ENCODE measurements at regions of chr14 and their contacts with region 1.

Region 1: DNA sequence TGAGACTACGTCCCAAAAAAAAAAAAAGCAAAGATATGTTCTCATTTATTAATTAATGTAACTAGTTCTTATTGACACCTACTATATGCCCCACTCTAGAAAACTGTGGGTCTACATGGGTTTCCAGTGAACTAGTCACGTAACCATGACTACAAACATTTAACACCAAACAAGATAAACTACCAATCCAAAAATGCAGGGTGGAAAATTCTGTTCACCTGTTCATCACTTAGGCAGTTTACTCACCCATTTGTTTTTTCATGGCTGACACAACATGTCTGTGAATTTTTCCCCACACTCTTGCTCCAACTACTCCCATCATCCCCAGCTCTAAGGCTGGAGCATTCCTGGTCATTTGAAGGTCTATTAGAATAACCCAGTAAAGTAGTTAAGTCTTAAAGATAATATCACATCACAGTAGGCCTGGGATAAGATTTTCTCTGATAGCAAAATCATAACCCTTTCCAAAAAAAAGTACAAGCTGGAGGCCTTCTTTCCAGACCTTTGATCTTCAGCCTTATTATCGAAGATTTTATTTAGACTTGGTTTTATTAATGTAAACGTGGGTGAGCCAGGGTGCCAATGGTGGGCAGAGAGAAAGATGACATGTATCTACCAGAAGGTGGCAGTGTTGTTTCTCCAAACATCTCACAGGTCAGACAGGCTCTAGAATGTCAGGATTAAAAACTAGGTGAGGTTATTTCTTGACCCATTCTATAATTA is 61.6 kb upstream of the DAAM1 start:
- DNase-seq: no peak
- ATAC-seq: peak; percentile 95
- H3K4me3 Mint-ChIP-seq: no peak overlapping the region
- H3K27ac Mint-ChIP-seq: no peak overlapping the region
- H3K4me1 Mint-ChIP-seq: no peaks in the 10 kb centered on the region
- H3K27me3 Mint-ChIP-seq: peaks cover 3% of the 10 kb centered on the region
- CTCF ChIP-seq: peak; percentile 68

Region 2: DNA sequence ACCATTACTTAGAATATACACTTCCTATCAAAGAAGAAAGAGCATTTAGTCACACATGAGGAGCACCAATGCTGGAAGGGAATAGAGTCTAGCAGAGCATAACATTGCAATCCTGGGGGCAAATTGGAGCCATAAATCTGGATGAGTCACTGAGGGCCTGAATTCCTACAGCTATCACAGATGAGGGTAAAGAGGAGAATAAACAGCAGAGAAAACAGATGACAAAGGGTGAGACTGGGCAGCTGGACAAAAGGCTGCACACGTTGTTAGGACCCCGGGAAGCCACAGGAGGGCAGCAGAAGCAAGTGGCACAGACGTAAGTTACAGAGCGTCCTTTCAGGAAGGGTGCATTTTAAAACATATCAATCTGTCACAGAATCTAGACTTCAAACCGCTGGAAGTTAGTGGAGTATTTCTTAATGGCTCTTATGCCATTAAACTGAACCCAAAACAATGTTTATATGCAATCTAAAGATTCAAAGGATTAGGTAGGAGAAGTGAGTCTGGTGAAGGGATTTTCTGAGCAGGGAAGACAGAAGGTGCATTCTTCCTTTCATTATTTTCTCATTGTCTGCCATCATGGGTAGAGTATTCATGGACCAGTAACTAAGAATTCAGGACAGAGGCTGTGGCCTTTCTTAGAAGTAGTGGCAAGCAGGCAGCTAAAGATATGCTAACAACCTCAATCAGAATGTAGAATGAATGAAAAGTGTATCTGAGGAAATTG is 98.2 kb before region 1 on chr14:
- CTCF ChIA-PET with region 1: no interaction called
- POLR2A ChIA-PET with region 1: no interaction called
- intact Hi-C with region 1: loop called (anchors 2 kb)
- DNase-seq: no peak
- ATAC-seq: no peak
- H3K4me3 Mint-ChIP-seq: no peak overlapping the region
- H3K27ac Mint-ChIP-seq: no peak overlapping the region
- H3K4me1 Mint-ChIP-seq: peaks cover 6% of the 10 kb centered on the region
- H3K27me3 Mint-ChIP-seq: peaks cover 11% of the 10 kb centered on the region
- CTCF ChIP-seq: no peak

Region 3: GRCh38 chr14:59358105-59358504 is 231.2 kb after region 1 on chr14:
- CTCF ChIA-PET with region 1: no interaction called
- POLR2A ChIA-PET with region 1: no interaction called
- intact Hi-C with region 1: loop called (anchors 10 kb)
- DNase-seq: no peak
- ATAC-seq: no peak
- H3K4me3 Mint-ChIP-seq: no peak overlapping the region
- H3K27ac Mint-ChIP-seq: no peak overlapping the region
- H3K4me1 Mint-ChIP-seq: peaks cover 83% of the 10 kb centered on the region
- H3K27me3 Mint-ChIP-seq: no peaks in the 10 kb centered on the region
- CTCF ChIP-seq: no peak

Region 4: DNA sequence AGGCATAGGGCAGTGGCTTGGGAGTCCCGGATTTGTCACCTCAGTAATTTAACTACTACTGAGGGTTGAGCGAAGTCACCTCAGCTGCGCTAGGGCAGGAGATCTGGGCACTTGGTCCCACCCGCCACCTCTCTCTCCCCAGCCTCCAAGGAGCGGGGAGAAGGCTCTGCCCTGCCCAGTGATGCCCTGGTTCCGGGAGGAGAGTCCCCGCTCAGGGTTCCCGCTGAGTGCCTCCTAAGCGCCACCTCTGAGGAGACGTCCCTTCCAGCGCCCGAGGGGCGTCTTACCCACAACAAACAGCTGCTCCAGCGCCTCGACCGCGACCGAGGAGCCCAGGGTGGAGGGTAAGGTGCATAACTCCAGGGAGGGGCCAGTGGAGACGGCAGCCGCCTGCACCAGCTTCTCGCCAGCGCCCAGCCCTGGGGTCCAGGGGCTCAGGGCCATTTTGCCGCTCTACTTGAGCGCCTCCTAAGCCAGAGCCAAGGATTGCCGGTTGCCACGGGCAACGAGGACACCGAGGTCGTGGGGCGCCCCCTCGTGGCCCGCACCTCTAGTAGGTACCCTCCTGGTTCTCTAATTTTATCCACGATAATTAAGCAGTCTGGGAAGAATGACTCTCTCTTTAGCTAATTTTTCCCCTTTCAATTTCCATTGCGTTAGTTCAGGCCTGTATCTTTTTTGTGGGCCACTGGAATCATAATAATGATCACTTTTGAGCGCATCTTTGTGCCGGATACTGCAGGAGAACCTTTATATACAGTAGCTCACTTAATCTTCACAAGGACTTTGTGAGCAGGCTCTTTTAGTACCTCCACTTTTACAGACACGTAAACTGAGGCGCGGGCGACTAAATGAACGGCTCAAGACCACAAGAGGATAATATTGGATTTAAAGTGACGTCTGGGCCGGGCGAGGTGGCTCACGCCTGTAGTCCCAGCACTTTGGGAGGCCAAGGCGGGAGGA is 449.7 kb after region 1 on chr14 and contains the start of gene CCDC175:
- CTCF ChIA-PET with region 1: interaction called, 4 read pairs
- POLR2A ChIA-PET with region 1: no interaction called
- intact Hi-C with region 1: loop called (anchors 1 kb)
- DNase-seq: peak; percentile 68
- ATAC-seq: peak; percentile 94
- H3K4me3 Mint-ChIP-seq: peak within 1 kb of the TSS; percentile 70
- H3K27ac Mint-ChIP-seq: no peak within 1 kb of the TSS
- H3K4me1 Mint-ChIP-seq: peaks cover 8% of the 10 kb centered on the region
- H3K27me3 Mint-ChIP-seq: peaks cover 11% of the 10 kb centered on the region
- CTCF ChIP-seq: no peak
- total RNA-seq, gene CCDC175: not detected in 2 replicates

Region 5: GRCh38 chr14:60184146-60184904 is 1057.5 kb after region 1 on chr14:
- CTCF ChIA-PET with region 1: no interaction called
- POLR2A ChIA-PET with region 1: no interaction called
- intact Hi-C with region 1: loop called (anchors 1 kb)
- DNase-seq: no peak
- ATAC-seq: peak; percentile 56
- H3K4me3 Mint-ChIP-seq: peak overlapping the region; percentile 82
- H3K27ac Mint-ChIP-seq: peak overlapping the region; percentile 87
- H3K4me1 Mint-ChIP-seq: peaks cover 17% of the 10 kb centered on the region
- H3K27me3 Mint-ChIP-seq: no peaks in the 10 kb centered on the region
- CTCF ChIP-seq: peak; percentile 89